Activated CD4-positive, alpha-beta T cell treated with anti-CD3 and anti-CD28 coated beads for 36 hours (primary cell): ENCODE measurements at regions of chr9 and their contacts with region 1.

Region 1: DNA sequence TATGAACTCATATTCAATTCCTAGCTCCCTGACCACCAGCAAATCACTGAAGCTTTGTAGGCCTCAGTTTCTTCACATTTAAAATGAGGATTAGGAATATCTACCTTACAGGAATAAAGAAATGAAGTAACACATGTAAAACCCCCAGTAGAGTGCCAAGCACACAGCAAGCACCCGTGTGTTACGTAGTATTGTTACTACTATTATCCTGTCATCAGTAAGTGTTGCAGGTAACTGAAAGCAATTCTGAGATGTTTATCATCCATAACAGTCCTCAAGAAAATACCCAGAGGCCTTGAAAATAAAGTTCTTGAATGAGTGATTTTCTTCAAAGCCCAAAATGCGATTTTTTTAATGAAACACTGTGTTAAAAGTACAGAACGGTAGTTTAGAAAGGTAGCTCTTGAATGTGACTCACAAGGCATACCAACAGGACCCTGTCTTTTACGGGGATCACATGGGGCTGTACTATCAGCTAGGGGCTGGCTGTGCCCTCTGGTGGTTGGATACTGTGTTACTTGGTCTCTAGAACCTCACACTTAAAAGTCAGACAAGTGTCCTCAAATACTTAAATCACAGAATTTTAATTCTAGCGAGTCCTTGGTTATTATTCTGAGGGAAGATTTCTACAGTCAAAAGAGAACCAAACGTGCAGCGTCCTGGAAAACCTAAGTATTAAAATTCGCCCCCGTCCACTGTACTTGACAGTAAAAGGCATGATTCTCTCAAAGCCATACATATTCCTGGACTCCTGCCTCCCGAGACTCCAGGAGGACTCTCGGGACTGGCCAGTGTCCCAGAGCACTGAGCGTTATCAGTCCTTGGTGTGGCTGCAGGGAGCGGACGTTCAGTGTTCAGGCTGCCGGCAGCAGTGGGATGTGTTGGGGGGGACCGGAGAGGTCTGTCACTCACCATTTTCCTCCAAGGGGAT is 725 bp downstream of the NDUFB6 start:
- DNase-seq: peak; percentile 85
- ATAC-seq: peak; percentile 92
- H3K4me3 Mint-ChIP-seq: peak overlapping the region; percentile 98
- H3K27ac Mint-ChIP-seq: peak overlapping the region; percentile 98
- H3K4me1 Mint-ChIP-seq: peaks cover 25% of the 10 kb centered on the region
- H3K27me3 Mint-ChIP-seq: no peaks in the 10 kb centered on the region

Region 2: DNA sequence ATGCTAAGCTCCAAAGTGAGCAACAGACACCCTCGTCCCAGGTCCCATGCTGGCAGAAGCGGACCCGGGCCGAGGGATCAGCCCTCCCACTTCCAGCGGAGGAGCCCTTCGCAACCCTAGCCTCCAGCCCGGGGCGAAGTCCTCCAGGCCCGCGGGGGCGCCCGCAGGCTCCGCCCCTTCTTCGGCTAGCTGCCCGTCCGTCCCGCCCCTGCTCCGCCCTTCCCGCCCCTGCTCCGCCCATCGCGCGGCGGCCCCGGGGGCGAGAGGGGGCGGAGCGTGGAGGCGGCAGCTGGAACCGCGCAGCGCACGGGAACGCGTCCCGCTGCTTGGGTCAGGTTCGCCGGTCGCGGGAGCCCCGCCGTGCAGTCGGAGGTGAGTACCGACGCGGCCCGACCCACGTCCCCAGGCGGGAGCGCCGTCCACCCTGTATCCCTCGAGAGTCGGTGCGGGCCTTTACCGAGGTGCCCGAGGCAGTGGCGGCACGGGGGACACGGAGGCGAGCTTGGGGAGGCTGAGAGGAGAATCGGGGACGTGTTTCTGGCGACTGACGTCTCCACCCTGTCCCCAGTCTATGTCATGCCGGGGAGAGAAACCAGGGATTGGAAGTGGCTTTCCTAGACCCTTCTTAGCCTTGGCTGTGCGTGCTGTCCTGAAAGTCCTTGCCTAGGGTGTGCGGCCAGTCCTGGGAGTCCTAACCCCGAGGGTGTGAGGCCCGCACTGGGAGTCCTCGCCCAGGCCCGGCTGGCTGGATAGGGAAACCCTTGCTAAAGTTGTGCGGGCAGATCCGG is 187.7 kb before region 1 on chr9 and contains the start of gene ACO1:
- CTCF ChIA-PET with region 1: interaction called, 530 read pairs
- POLR2A ChIA-PET with region 1: interaction called, 5 read pairs
- intact Hi-C with region 1: loop called (anchors 1 kb)
- DNase-seq: peak; percentile 90
- ATAC-seq: peak; percentile 93
- H3K4me3 Mint-ChIP-seq: peak within 1 kb of the TSS; percentile 78
- H3K27ac Mint-ChIP-seq: peak within 1 kb of the TSS; percentile 16
- H3K4me1 Mint-ChIP-seq: peaks cover 12% of the 10 kb centered on the region
- H3K27me3 Mint-ChIP-seq: peaks cover 16% of the 10 kb centered on the region
- total RNA-seq, gene ACO1: 15.5 TPM

Region 3: DNA sequence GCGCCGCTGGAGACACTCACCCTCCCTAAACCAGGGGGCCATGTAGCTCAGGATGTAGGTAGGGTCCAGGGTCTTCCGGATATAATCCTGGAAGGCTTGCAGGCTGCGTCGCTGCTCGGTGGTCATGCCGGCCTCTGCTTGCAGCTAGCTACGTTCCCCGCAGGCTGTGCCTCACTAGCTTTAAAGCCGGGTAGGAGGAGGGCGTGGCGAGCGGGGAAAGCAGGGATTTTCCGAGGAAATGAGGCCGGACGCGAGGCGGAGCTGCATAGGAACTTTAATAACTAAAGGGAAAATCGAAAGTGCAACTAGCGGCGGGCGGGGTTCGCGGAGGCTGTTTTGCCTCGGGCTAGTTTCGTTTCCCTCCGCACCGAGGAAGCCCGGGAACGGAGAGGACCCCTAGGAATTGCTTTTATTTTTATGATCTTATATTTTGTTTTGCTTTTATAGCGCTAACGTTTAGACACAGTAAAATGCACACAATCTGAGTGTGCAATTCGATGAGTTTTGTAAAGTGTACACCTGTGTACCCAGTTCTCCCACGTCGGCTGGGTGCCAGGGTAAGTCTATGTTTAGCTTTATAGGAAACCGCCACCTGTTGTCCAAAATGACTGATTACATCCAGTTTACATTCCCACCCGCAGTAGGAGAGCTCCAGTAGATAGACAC is 46.1 kb before region 1 on chr9 and contains the start of gene RIGI:
- CTCF ChIA-PET with region 1: interaction called, 17 read pairs
- POLR2A ChIA-PET with region 1: no interaction called
- intact Hi-C with region 1: loop called (anchors 1 kb)
- DNase-seq: peak; percentile 86
- ATAC-seq: peak; percentile 78
- H3K4me3 Mint-ChIP-seq: peak within 1 kb of the TSS; percentile 80
- H3K27ac Mint-ChIP-seq: peak within 1 kb of the TSS; percentile 90
- H3K4me1 Mint-ChIP-seq: peaks cover 41% of the 10 kb centered on the region
- H3K27me3 Mint-ChIP-seq: no peaks in the 10 kb centered on the region
- total RNA-seq, gene RIGI: 8.9 to 9.7 TPM

Region 4: GRCh38 chr9:32550562-32551433 is 21.4 kb before region 1 on chr9:
- CTCF ChIA-PET with region 1: interaction called, 18 read pairs
- POLR2A ChIA-PET with region 1: interaction called, 7 read pairs
- intact Hi-C with region 1: loop called (anchors 1 kb)
- DNase-seq: peak; percentile 95
- ATAC-seq: peak; percentile 74
- H3K4me3 Mint-ChIP-seq: peak overlapping the region; percentile 96
- H3K27ac Mint-ChIP-seq: peak overlapping the region; percentile 99
- H3K4me1 Mint-ChIP-seq: peaks cover 47% of the 10 kb centered on the region
- H3K27me3 Mint-ChIP-seq: no peaks in the 10 kb centered on the region

Region 5: DNA sequence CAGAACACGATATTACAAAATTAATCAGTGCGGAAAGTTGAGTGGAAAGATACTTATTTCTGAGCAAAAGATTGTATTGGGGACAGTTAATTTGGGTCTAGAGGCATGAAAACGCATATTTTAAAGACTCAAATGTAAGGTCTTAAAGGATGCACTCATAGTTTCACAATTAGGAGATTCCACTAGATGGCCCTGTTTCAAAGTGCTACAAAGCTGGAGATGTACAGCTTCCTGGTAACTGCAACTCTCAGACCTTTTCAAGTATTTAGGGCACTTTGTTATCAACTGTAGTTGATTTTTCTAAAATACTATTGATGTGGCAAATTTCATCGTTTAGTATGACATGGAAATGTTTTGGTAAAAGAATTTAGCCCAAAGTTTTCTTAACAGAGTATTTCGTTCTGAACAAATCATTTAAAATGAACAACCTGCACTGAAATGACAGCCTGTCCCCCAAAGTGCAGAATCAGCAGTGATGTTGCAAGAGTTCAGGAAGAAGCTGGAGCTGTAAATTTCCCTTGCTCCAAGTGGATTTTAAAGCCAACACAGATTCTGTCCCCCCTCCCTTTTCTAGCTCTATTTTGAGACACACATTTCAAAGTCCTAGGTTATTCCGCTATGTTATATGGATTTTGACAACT is 17.0 kb after region 1 on chr9:
- CTCF ChIA-PET with region 1: interaction called, 10 read pairs
- POLR2A ChIA-PET with region 1: no interaction called
- intact Hi-C with region 1: no loop called
- DNase-seq: no peak
- ATAC-seq: peak; percentile 63
- H3K4me3 Mint-ChIP-seq: no peak overlapping the region
- H3K27ac Mint-ChIP-seq: no peak overlapping the region
- H3K4me1 Mint-ChIP-seq: no peaks in the 10 kb centered on the region
- H3K27me3 Mint-ChIP-seq: peaks cover 18% of the 10 kb centered on the region